HCT116 (cell line): ENCODE measurements at regions of chr19 and their contacts with region 1.

Region 1: DNA sequence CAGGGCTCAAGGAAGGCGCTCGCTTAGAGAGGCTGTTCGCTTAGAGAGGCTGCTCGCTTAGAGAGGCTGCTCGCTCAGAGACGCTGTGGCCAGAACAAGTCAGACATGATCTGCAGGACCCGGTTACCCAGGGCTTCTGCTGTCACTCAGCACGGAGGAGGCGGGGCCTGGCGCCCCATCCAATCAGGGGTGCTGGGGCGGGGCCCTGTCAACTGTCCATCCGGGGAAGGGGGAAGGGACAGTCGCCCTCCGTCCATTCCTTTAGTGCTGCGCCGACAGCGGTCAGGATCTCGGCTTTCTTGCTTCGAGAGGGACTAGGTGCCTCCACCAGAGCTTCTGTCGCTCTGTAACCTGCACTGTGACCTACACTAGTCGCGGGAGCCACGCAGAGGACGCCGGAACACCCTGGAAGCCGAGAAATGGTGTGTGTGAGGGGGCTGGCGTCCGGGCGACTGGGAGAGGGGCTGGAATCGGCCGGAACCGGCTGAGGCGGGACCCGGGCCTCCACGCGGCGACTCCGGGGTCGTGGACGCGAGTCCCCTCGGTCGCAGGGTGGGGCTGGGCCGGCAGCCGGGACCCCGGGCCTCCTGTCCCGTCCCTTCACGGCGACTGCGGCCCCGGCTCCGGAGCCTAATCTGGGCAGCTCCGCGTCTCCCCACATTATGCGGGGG is at the start of gene ZNF440:
- DNase-seq: peak; percentile 83
- ATAC-seq: peak; percentile 100
- H3K4me3 ChIP-seq: peak within 1 kb of the TSS; percentile 73 to 89
- H3K27ac ChIP-seq: peak within 1 kb of the TSS; percentile 75
- H3K4me1 ChIP-seq: peaks cover 0 to 6% of the 10 kb centered on the region in 2 experiments; a peak in 1 of 4 replicates
- H3K27me3 ChIP-seq: no peaks in the 10 kb centered on the region
- CTCF ChIP-seq: no peak
- POLR2A ChIP-seq: no peak
- RAD21 ChIP-seq: no peak
- total RNA-seq, gene ZNF440: 11.4 TPM

Region 2: DNA sequence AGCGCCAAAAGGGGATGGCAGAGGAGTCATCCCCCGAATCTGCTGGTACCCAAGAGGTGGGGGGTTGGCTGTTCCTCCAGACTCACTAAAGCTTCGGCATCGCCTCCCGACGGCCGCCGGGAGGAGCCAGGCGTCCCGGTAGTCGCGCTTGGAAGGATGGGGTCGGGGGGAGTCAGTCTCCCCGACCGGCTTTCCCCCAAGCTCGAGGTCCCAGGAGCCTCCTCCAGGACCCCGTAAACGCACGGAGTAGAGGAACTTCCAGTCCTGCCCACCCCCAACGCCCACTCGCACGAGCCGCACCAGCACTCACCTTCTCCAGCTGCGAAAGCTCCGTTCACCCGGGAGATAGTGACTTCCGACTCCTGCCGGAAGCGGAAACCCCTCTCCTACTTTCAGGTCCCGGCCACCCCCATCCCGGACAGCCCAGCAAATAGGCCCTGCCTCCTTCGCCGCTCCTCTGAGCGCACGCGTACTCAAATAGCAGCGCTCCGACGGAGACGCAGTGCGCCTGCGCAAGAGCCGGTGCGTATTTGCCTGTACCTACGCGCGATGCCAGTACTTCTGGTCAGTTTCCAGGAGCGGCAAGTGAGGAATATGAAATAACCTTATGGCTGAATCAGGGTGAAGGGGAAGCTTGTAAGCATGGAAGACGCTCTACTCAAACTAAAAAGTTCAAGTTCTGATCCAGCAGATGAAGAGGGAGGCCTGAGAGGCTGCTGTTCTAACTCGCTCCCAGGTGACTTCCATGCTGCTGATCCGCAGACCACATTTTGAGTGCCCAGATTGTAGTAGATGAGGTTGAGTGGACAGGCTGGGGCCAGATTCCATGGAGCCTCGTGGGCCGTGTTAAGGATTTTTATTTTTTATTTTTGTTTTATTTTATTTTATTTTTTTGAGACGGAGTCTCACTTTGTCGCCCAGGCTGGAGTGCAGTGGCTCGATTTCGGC is 255.0 kb before region 1 on chr19 and contains the start of gene ELOF1:
- CTCF ChIA-PET with region 1: no interaction called
- POLR2A ChIA-PET with region 1: no interaction called
- RAD21 ChIA-PET with region 1: no interaction called
- intact Hi-C with region 1: loop called (anchors 1 kb)
- DNase-seq: peak; percentile 97
- ATAC-seq: peak; percentile 94
- H3K4me3 ChIP-seq: peak within 1 kb of the TSS; percentile 85 to 94
- H3K27ac ChIP-seq: peak within 1 kb of the TSS; percentile 57
- H3K4me1 ChIP-seq: peaks cover 0 to 17% of the 10 kb centered on the region in 2 experiments; a peak in 2 of 4 replicates
- H3K27me3 ChIP-seq: no peaks in the 10 kb centered on the region
- CTCF ChIP-seq: peak in 2 of 3 experiments; percentile 7 to 28; a peak in 1 of 6 replicates
- POLR2A ChIP-seq: peak; percentile 92
- RAD21 ChIP-seq: no peak
- total RNA-seq, gene ELOF1: 74.5 TPM

Region 3: GRCh38 chr19:11694533-11695439 is 119.4 kb before region 1 on chr19:
- CTCF ChIA-PET with region 1: interaction called, 4 read pairs
- POLR2A ChIA-PET with region 1: interaction called, 3 read pairs
- RAD21 ChIA-PET with region 1: no interaction called
- intact Hi-C with region 1: loop called (anchors 5 kb)
- DNase-seq: peak; percentile 91
- ATAC-seq: peak; percentile 96
- H3K4me3 ChIP-seq: peak overlapping the region; percentile 81 to 89
- H3K27ac ChIP-seq: peak overlapping the region; percentile 77
- H3K4me1 ChIP-seq: peaks cover 2 to 15% of the 10 kb centered on the region in 2 experiments; a peak in 3 of 4 replicates
- H3K27me3 ChIP-seq: no peaks in the 10 kb centered on the region
- CTCF ChIP-seq: no peak
- POLR2A ChIP-seq: peak; percentile 97
- RAD21 ChIP-seq: no peak

Region 4: GRCh38 chr19:11856596-11857250 is 42.6 kb after region 1 on chr19:
- CTCF ChIA-PET with region 1: no interaction called
- POLR2A ChIA-PET with region 1: no interaction called
- RAD21 ChIA-PET with region 1: no interaction called
- intact Hi-C with region 1: no loop called
- DNase-seq: no peak
- ATAC-seq: no peak
- H3K4me3 ChIP-seq: no peak overlapping the region
- H3K27ac ChIP-seq: no peak overlapping the region
- H3K4me1 ChIP-seq: no peaks in the 10 kb centered on the region
- H3K27me3 ChIP-seq: no peaks in the 10 kb centered on the region
- CTCF ChIP-seq: no peak
- POLR2A ChIP-seq: no peak
- RAD21 ChIP-seq: no peak